ENCODE measurements at regions of chr2 and their contacts with region 1.

Region 1: DNA sequence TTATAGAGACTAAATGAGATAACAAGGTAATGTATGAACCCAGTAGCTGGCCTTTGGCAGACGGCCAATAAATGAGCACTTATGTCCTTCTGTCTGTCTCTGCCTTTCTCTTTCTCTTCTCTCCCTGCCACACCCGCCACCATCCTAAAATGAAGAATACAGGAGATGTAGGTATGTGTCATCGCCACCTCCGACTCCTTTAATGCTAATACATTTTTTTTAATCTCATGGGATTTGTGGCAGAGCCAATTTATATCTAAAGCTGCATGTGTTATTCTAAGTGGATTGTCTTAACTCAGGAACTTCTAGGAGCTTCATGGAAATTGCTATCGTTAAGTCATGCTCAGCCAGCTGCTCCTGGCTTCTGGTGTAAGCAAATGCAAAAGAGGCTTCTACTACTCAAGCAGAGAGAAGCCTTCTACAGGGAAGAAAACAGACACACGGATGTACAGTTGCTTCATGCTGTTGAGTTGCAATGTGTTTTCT is 2.2 kb downstream of the TM4SF20 start:
- DNase-seq: peak; percentile 83
- H3K4me3 ChIP-seq: no peak overlapping the region
- H3K27ac ChIP-seq: peak overlapping the region; percentile 75
- H3K4me1 ChIP-seq: peaks cover 52% of the 10 kb centered on the region
- H3K27me3 ChIP-seq: no peaks in the 10 kb centered on the region
- CTCF ChIP-seq: no peak

Region 2: DNA sequence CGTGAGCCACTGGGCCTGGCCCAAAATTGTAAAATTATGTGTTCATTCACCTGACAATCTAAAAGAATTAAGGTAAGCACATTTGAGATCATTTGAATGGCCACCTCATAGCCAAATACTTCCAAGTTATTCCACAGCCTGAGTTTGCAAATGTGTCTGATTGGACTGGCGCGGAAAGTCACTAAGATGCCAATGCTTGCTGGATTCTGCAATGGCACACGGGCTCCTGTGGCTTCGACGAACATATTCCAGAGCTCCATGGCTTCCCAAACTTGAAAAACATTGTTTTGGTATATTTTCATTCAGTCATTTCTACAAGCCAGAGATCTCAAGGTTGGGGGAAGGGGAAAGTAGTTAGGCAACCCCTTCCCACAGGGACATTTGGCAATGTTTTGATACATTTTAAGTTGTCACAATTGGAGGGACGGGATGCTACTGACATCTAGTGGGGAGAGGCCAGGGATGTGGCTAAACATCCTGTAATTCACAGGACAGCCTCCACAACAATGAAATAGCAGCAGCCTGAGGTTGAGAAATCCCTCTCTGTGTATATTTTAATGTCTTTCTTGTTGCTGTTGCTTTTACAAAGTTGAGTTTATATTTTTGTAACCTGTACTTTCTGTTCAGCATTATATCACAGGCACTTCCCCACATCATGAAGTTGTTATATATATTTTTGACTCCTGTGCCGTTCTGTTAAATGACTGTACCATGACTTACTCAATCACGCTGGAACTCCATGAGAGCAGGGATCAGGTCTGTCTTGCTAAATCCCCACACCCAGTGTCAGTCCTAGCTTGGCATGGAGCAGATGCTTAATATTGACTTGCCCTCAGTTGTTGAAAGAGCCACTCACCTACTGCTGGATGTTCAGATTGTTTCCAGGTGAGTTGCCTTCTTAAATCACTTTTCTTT is 269.9 kb before region 1 on chr2:
- CTCF ChIA-PET with region 1: no interaction called
- POLR2A ChIA-PET with region 1: no interaction called
- intact Hi-C with region 1: no loop called
- DNase-seq: peak; percentile 81
- H3K4me3 ChIP-seq: no peak overlapping the region
- H3K27ac ChIP-seq: no peak overlapping the region
- H3K4me1 ChIP-seq: no peaks in the 10 kb centered on the region
- H3K27me3 ChIP-seq: no peaks in the 10 kb centered on the region
- CTCF ChIP-seq: peak; percentile 87

Region 3: GRCh38 chr2:227388537-227389011 is 11.6 kb after region 1 on chr2:
- CTCF ChIA-PET with region 1: no interaction called
- POLR2A ChIA-PET with region 1: no interaction called
- intact Hi-C with region 1: loop called (anchors 1 kb)
- DNase-seq: no peak
- H3K4me3 ChIP-seq: no peak overlapping the region
- H3K27ac ChIP-seq: no peak overlapping the region
- H3K4me1 ChIP-seq: peaks cover 3% of the 10 kb centered on the region
- H3K27me3 ChIP-seq: no peaks in the 10 kb centered on the region
- CTCF ChIP-seq: no peak

Region 4: DNA sequence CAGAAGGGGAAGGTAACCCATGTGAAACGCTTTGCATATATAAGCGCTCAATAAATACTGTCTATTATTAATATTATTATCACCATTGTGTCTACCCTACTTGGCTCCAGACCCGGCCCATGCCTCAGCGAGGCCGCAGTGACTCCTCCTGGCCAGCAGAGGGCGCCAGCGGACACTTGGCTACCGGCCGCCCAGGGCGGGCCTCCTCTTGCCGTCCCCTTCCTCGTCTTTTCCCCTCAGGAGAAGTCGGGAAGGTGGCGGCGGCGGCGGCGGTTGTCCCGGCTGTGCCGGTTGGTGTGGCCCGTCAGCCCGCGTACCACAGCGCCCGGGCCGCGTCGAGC is 94.9 kb after region 1 on chr2 and contains the start of gene AGFG1:
- CTCF ChIA-PET with region 1: no interaction called
- POLR2A ChIA-PET with region 1: no interaction called
- intact Hi-C with region 1: no loop called
- DNase-seq: peak; percentile 89
- H3K4me3 ChIP-seq: peak within 1 kb of the TSS; percentile 93
- H3K27ac ChIP-seq: peak within 1 kb of the TSS; percentile 89
- H3K4me1 ChIP-seq: peaks cover 13% of the 10 kb centered on the region
- H3K27me3 ChIP-seq: no peaks in the 10 kb centered on the region
- CTCF ChIP-seq: peak; percentile 97
- total RNA-seq, gene AGFG1: 118 and 122 TPM in 2 replicates

Measured in A673 (cell line).